MCF 10A (cell line): ENCODE measurements at regions of chr19 and their contacts with region 1.

Region 1: DNA sequence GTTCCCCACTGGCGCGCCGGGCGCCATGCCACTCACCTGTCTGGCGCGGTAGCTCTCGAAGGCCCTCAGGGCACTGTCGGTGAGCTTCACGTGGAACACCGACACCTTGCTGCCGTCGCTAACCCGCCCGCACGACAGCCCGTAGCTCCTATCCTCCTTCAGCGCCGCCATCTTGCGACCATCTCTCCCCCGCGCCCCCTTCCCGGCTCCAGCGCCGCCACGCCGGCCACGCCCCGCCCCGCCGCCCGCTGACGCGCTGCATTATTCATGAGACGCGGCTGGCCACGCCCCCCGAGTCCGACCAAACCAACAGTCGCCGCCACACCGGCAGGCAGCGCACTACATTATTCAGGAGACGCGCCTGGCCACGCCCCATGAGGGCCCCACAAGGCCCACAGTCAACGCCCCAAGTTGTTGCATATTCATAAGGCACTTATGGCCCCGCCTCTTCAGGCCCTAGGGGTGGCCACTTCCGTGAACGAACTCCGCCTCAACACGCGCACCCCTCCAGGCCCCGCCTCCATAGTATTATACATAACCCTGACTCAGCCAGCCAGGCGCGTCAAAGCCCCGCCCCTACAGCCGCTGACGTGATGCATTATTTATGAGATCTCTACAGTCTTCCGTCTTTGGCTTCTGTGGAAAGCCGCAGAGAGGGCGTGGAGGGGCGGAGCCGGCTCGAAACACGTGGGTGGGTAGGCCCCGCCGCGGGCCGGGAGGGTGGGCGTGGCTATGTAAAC is at the start of gene ELL:
- DNase-seq: peak; percentile 100
- H3K4me3 Mint-ChIP-seq: peak within 1 kb of the TSS; percentile 89
- H3K27ac Mint-ChIP-seq: peak within 1 kb of the TSS; percentile 83
- H3K4me1 Mint-ChIP-seq: peaks cover 15% of the 10 kb centered on the region
- H3K27me3 Mint-ChIP-seq: no peaks in the 10 kb centered on the region
- CTCF ChIP-seq: no peak
- total RNA-seq, gene ELL: 20.8 and 22.4 TPM in 2 replicates

Region 2: GRCh38 chr19:18259893-18260292 is 262.2 kb before region 1 on chr19:
- CTCF ChIA-PET with region 1: no interaction called
- POLR2A ChIA-PET with region 1: no interaction called
- intact Hi-C with region 1: no loop called
- DNase-seq: peak; percentile 43
- H3K4me3 Mint-ChIP-seq: no peak overlapping the region
- H3K27ac Mint-ChIP-seq: no peak overlapping the region
- H3K4me1 Mint-ChIP-seq: no peaks in the 10 kb centered on the region
- H3K27me3 Mint-ChIP-seq: no peaks in the 10 kb centered on the region
- CTCF ChIP-seq: no peak

Region 3: GRCh38 chr19:18419195-18419698 is 102.8 kb before region 1 on chr19 and contains the start of gene SSBP4:
- CTCF ChIA-PET with region 1: no interaction called
- POLR2A ChIA-PET with region 1: interaction called, 12 read pairs
- intact Hi-C with region 1: no loop called
- DNase-seq: peak; percentile 80
- H3K4me3 Mint-ChIP-seq: peak within 1 kb of the TSS; percentile 77
- H3K27ac Mint-ChIP-seq: peak within 1 kb of the TSS; percentile 72
- H3K4me1 Mint-ChIP-seq: peaks cover 29% of the 10 kb centered on the region
- H3K27me3 Mint-ChIP-seq: no peaks in the 10 kb centered on the region
- CTCF ChIP-seq: peak; percentile 51
- total RNA-seq, gene SSBP4: 22.3 and 26.3 TPM in 2 replicates

Region 4: GRCh38 chr19:18469069-18469846 is 52.8 kb before region 1 on chr19:
- CTCF ChIA-PET with region 1: interaction called, 24 read pairs
- POLR2A ChIA-PET with region 1: interaction called, 3 read pairs
- intact Hi-C with region 1: loop called (anchors 1 kb)
- DNase-seq: peak; percentile 57
- H3K4me3 Mint-ChIP-seq: no peak overlapping the region
- H3K27ac Mint-ChIP-seq: no peak overlapping the region
- H3K4me1 Mint-ChIP-seq: peaks cover 26% of the 10 kb centered on the region
- H3K27me3 Mint-ChIP-seq: no peaks in the 10 kb centered on the region
- CTCF ChIP-seq: peak; percentile 84

Region 5: DNA sequence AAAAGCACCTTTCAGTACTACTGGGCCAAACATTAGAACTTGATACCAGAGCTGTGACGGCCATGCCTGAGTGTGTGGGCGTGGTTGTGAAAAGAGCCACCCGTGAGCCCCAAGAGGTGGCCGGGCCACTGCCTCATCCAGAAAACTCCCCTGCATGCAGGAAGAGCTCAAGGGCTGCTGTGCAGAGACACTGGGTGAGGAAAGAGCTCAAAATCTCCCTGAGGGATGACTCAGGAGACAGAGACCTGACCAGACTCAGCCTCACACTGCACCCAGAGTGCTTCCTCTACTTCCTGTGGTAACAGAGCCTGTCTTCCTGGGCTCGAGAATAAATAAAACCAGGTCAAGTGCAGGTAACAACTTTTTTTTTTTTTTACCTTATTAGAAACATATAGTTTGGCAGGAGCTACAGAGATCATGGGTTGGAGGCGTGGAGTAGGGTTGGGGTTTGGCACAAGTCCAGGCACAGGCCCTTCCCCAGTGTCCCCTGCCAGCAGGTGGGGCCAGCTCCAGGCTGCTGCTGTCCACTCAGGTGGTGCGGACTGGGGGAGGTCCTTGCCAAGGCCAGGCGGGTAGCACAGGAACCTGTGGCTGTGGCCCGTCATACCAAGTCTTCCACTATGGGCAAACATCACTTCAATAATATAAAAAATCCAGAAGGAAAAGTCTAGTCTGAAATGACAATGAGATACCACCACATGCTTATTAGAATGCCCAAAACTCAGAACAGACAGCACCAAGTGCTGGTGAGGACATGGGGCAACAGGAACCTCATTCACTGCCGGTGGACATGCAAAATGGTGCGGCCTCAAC is 25.7 kb before region 1 on chr19:
- CTCF ChIA-PET with region 1: interaction called, 17 read pairs
- POLR2A ChIA-PET with region 1: interaction called, 71 read pairs
- intact Hi-C with region 1: no loop called
- DNase-seq: peak; percentile 86
- H3K4me3 Mint-ChIP-seq: peak overlapping the region; percentile 53
- H3K27ac Mint-ChIP-seq: peak overlapping the region; percentile 67
- H3K4me1 Mint-ChIP-seq: peaks cover 22% of the 10 kb centered on the region
- H3K27me3 Mint-ChIP-seq: no peaks in the 10 kb centered on the region
- CTCF ChIP-seq: peak; percentile 10

Region 6: GRCh38 chr19:18542936-18543815 is 21.1 kb after region 1 on chr19 and contains the start of gene FKBP8:
- CTCF ChIA-PET with region 1: interaction called, 7 read pairs
- POLR2A ChIA-PET with region 1: interaction called, 18 read pairs
- intact Hi-C with region 1: no loop called
- DNase-seq: peak; percentile 87
- H3K4me3 Mint-ChIP-seq: peak within 1 kb of the TSS; percentile 87
- H3K27ac Mint-ChIP-seq: peak within 1 kb of the TSS; percentile 94
- H3K4me1 Mint-ChIP-seq: peaks cover 8% of the 10 kb centered on the region
- H3K27me3 Mint-ChIP-seq: no peaks in the 10 kb centered on the region
- CTCF ChIP-seq: no peak
- total RNA-seq, gene FKBP8: 142 and 154 TPM in 2 replicates

Region 7: DNA sequence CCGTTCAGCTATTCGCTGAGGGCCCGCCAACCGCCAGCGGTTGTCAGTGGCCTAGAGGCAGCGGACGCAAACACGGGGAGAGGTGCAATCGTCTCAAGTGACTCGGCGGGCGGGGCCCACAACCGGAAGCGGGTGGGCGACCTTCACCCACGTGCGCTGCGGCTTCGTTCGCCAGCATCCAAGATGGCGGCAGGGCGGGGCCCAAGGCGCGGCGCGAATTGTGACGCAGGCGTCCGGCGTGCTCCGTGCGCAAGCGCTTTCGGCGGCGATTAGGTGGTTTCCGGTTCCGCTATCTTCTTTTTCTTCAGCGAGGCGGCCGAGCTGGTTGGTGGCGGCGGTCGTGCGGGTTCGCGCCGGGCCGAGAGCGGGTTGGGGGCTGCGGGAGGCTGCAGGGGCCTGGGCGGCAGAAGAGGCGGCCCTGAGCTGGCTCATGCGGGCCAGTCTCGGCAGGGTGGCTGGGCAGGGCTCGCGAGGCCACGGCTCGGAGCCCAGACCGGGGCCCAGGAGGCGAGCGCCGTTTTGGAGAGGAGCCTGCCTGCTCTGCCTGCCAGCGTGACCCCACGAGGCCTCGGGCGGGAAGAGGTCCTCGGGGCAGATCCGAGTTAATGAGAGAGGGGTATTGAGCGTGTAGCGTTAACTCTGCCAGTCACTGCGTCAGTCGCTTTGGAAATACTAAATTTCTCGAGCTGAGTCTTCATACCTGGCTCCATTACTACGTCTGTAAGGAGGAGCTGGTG is 49.7 kb after region 1 on chr19 and contains the start of gene UBA52:
- CTCF ChIA-PET with region 1: interaction called, 5 read pairs
- POLR2A ChIA-PET with region 1: interaction called, 63 read pairs
- intact Hi-C with region 1: loop called (anchors 1 kb)
- DNase-seq: peak; percentile 99
- H3K4me3 Mint-ChIP-seq: peak within 1 kb of the TSS; percentile 87
- H3K27ac Mint-ChIP-seq: peak within 1 kb of the TSS; percentile 98
- H3K4me1 Mint-ChIP-seq: peaks cover 9% of the 10 kb centered on the region
- H3K27me3 Mint-ChIP-seq: no peaks in the 10 kb centered on the region
- CTCF ChIP-seq: no peak
- total RNA-seq, gene UBA52: 1,330 and 1,392 TPM in 2 replicates